Naive thymus-derived CD8-positive, alpha-beta T cell (primary cell): ENCODE measurements at regions of chr3 and their contacts with region 1.

Region 1: DNA sequence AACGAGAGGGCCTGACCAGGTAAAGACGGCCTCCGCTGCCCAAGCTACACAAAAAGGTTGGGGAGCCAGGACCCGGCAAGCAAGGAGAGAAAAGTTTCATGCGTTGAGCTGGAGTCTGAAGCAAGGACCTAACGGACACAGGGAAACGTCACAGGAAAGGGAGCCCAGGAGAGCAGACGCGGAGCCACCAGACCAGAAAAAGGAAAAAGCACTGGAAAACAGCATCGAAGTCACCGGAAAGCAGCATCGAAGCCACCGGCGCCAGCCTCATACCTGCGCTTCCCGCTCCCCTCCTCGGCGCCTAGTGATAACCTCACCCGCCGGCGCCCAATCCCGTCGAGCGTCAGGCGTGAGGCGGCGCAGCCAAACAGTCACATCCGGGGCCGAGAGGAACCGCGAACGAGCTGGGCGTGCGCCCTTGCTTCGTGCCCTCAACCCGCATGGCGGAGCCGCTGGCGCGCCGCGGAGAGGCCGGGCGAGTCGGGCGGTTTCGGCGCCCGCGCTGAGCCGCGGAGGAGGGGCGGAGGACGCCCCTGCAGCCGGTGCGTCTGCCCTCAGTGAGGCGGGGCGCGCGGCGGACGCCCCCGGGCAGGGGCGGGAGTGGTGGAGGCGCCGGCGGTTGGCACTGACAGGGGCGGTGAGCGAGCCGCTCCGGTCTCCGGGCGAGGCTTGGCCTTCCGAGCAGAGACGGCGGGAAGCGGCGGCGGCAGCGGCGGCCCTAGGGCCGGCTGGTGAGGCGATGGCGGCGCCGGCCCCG is at the starts of genes FBXO45 and WDR53:
- DNase-seq: peak; percentile 92 to 96 (median 95)
- ATAC-seq: peak; percentile 91 to 92
- H3K4me3 Mint-ChIP-seq: peak within 1 kb of the TSS; percentile 85 to 99 (median 97)
- H3K27ac Mint-ChIP-seq: peak within 1 kb of the TSS; percentile 90 to 99 (median 98)
- H3K4me1 Mint-ChIP-seq: peaks cover 17 to 52% (median 35%) of the 10 kb centered on the region in 4 donors
- H3K27me3 Mint-ChIP-seq: no peaks in the 10 kb centered on the region
- polyA plus RNA-seq, gene FBXO45: 1.7 to 2.9 (median 2.8) TPM
- polyA plus RNA-seq, gene WDR53: 11.8 to 17.4 (median 12.6) TPM

Region 2: DNA sequence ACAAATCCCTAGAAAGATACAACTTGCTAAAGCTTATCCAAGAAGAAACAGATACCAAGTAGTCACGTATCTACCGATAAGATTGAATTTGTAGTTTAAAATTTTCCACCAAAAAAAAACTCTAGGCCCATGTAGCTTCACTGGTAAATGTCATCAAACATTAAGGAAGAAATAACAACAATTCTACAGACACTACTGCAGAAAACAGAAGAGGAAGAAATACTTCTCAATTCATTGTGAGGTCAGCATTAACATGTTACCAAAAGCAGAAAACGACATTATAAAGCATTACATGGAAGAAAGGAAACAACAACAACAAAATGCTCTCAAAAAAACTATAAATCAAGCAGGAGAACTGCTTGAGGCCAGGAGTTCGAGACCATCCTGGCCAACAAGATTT is 202.7 kb before region 1 on chr3:
- POLR2A ChIA-PET with region 1: no interaction called
- DNase-seq: no peak
- ATAC-seq: no peak
- H3K4me3 Mint-ChIP-seq: no peak overlapping the region
- H3K27ac Mint-ChIP-seq: peak overlapping the region in 2 of 10 donors; percentile 22 to 31
- H3K4me1 Mint-ChIP-seq: peaks cover 0 to 5% (median 2%) of the 10 kb centered on the region in 4 donors
- H3K27me3 Mint-ChIP-seq: no peaks in the 10 kb centered on the region

Region 3: GRCh38 chr3:196502775-196503195 is 65.6 kb before region 1 on chr3:
- POLR2A ChIA-PET with region 1: interaction called, 15 read pairs
- DNase-seq: peak; percentile 8 to 70 (median 56)
- ATAC-seq: peak; percentile 52 to 65
- H3K4me3 Mint-ChIP-seq: peak overlapping the region; percentile 95 to 100 (median 98)
- H3K27ac Mint-ChIP-seq: peak overlapping the region; percentile 91 to 99 (median 96)
- H3K4me1 Mint-ChIP-seq: peaks cover 17 to 48% (median 47%) of the 10 kb centered on the region in 4 donors
- H3K27me3 Mint-ChIP-seq: no peaks in the 10 kb centered on the region

Region 4: GRCh38 chr3:196757876-196758739 is 189.7 kb after region 1 on chr3:
- POLR2A ChIA-PET with region 1: no interaction called
- DNase-seq: peak in 1 of 10 donors; percentile 9
- ATAC-seq: peak; percentile 39 to 73
- H3K4me3 Mint-ChIP-seq: peak overlapping the region in 8 of 10 donors; percentile 0 to 54 (median 30)
- H3K27ac Mint-ChIP-seq: peak overlapping the region; percentile 20 to 86 (median 78)
- H3K4me1 Mint-ChIP-seq: peaks cover 30 to 65% (median 60%) of the 10 kb centered on the region in 4 donors
- H3K27me3 Mint-ChIP-seq: no peaks in the 10 kb centered on the region